Psoas muscle (tissue), 8 donors: ENCODE measurements at regions of chr15 and their contacts with region 1.

Region 1: GRCh38 chr15:81514725-81515124 is 140.7 kb upstream of the TMC3 start:
- DNase-seq: no peak
- ATAC-seq: no peak
- H3K4me3 ChIP-seq: no peak overlapping the region
- H3K27ac ChIP-seq: no peak overlapping the region
- H3K4me1 ChIP-seq: no peaks in the 10 kb centered on the region
- H3K27me3 ChIP-seq: peaks cover 0 to 4% (median 0%) of the 10 kb centered on the region in 3 donors
- CTCF ChIP-seq: no peak

Region 2: DNA sequence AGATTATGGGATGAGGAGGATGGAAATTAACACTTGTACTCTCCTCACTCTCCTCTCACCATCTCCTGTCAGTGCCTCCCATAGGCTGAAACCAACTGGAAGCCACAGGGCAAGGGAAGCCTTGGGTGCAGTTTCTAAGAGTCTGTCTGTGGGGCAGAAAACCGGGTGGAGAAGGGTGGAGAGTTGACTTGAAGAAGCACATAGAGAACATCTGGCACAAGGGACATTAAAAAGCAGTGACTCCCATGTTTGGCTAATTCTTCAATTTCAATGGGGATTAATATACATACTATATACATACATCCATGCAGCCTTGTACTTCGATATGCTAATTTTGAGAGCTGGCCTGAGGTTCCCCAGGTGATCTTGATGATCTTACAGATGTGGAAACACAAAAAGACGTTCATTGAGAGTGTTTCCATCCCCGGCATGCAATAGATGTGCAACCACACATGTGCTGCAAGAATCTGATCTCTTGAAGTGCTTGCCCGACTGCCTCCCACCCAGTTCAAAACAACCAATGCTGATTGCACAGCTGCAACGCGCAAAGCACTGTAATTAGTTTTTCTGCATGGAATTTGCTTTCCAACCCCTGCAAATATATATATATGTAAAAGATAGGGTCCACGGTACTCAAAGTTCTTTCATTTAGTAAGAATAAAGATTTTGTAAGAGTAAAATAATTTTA is 18.8 kb before region 1 on chr15:
- intact Hi-C with region 1: loop called in 1 of 2 experiments (anchors 1 kb)
- DNase-seq: no peak
- ATAC-seq: no peak
- H3K4me3 ChIP-seq: no peak overlapping the region
- H3K27ac ChIP-seq: no peak overlapping the region
- H3K4me1 ChIP-seq: no peaks in the 10 kb centered on the region
- H3K27me3 ChIP-seq: peaks cover 0 to 6% (median 0%) of the 10 kb centered on the region in 3 donors
- CTCF ChIP-seq: no peak

Region 3: DNA sequence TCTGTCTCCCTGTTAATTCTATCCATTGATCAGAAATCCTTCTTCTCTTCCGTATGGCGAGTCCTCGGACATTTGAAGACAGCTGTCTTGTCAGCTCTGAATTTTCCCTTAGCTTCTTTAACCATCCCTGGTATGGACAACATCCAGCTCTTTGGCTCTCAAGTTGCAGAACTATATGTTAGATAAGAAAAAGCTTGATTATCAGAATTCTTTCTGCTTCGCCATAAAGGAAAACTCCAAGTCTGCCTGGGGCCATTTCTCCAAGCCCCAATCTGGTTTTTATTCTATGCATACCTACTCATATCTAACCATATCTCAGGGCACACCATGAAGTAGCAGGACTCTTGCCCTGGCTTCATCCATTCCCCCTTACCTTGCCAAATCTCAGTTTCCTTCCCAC is 74.9 kb after region 1 on chr15:
- intact Hi-C with region 1: no loop called
- DNase-seq: no peak
- ATAC-seq: no peak
- H3K4me3 ChIP-seq: no peak overlapping the region
- H3K27ac ChIP-seq: no peak overlapping the region
- H3K4me1 ChIP-seq: no peaks in the 10 kb centered on the region
- H3K27me3 ChIP-seq: no peaks in the 10 kb centered on the region
- CTCF ChIP-seq: no peak